Heart right ventricle (tissue), 16 donors: ENCODE measurements at regions of chr11 and their contacts with region 1.

Region 1: DNA sequence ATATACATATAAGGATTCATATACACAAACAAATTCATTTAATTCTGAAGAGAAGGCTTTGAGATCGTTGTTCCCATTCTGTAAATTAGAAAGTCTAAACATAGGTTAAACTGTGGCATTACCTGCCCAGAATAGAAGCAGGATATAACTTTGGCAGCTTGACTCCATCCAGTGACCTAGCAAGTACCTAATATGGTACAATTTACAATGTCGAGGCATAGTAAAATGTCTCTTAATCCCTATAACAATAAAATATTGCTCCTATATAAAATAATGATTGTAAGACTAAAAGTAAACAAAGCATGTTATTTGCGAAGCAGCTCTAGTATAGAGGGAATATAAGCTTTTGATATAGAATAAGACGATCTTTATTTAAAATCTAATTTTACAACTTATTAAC is 756.0 kb downstream of the LUZP2 start:
- DNase-seq: no peak
- ATAC-seq: no peak
- H3K4me3 ChIP-seq: no peak overlapping the region
- H3K27ac ChIP-seq: no peak overlapping the region
- H3K4me1 ChIP-seq: no peaks in the 10 kb centered on the region
- H3K27me3 ChIP-seq: no peaks in the 10 kb centered on the region
- CTCF ChIP-seq: no peak

Region 2: DNA sequence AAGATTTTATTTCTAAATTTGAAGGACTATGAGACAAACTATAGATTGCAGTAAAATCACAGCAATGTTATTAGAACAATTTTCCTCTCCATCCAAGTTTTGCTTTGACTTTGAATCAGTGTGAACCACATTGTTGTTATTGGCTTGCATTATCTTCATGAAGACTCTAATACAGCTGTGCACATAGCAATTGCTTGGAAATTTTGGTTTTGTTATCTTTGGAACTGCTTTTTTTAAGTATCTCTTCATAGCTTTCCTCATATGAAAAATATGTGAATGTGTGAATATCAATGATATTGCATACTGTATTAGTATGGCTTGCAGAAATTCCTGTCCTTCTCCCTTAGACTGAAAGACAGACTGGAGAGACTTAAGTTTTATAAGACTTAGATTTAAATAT is 89.4 kb before region 1 on chr11:
- intact Hi-C with region 1: no loop called
- DNase-seq: no peak
- ATAC-seq: peak in 3 of 8 donors; percentile 24 to 55 (median 30)
- H3K4me3 ChIP-seq: no peak overlapping the region
- H3K27ac ChIP-seq: no peak overlapping the region
- H3K4me1 ChIP-seq: no peaks in the 10 kb centered on the region
- H3K27me3 ChIP-seq: no peaks in the 10 kb centered on the region
- CTCF ChIP-seq: no peak

Region 3: DNA sequence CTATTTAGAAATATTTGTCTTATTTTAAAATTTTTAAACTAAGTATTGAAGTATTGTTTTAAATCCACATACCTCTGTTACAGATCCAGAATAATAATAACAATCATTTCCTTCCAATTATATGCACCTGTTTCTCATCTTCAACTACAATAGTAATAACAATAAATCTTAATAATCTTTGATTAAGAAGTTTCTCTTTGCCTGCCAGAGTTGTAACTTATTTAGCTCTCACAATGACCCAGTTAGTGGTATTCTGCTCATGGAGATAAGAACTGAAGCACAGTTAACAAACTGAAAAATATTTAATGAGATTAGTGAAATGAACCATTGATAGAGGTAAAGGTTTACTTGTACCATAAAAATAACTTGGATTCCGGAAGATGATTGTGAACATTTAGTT is 40.3 kb after region 1 on chr11:
- intact Hi-C with region 1: loop called in 1 of 10 experiments (anchors 2 kb)
- DNase-seq: no peak
- ATAC-seq: no peak
- H3K4me3 ChIP-seq: no peak overlapping the region
- H3K27ac ChIP-seq: no peak overlapping the region
- H3K4me1 ChIP-seq: no peaks in the 10 kb centered on the region
- H3K27me3 ChIP-seq: no peaks in the 10 kb centered on the region
- CTCF ChIP-seq: no peak